Naive thymus-derived CD4-positive, alpha-beta T cell (primary cell): ENCODE measurements at regions of chr11 and their contacts with region 1.

Region 1: DNA sequence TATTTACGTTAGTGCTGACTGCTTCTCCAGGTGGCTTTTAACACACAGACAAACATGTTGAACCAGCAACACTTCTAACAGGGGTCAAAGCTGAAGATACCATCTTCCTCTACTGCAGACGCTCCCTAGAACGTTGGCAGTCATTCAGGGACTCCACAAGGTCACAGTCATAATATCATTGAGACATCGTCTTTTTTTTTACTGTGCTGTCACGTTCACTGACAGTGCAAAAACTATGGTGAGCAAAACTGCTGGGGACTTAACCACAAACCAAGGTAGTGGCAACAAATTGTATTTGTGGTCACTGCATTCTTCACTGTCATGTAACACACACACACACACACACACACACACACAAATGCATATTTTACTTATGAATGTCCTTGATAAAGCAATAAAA is 244.9 kb downstream of the CASP12 start:
- DNase-seq: no peak
- ATAC-seq: peak; percentile 76
- H3K4me3 ChIP-seq: no peak overlapping the region
- H3K4me3 Mint-ChIP-seq: no peak overlapping the region
- H3K27ac ChIP-seq: no peak overlapping the region
- H3K27ac Mint-ChIP-seq: no peak overlapping the region
- H3K4me1 ChIP-seq: peaks cover 0 to 10% of the 10 kb centered on the region in 2 donors
- H3K4me1 Mint-ChIP-seq: peaks cover 0 to 43% (median 9%) of the 10 kb centered on the region in 7 donors
- H3K27me3 ChIP-seq: no peaks in the 10 kb centered on the region
- H3K27me3 Mint-ChIP-seq: no peaks in the 10 kb centered on the region

Region 2: GRCh38 chr11:104728927-104729326 is 75.5 kb after region 1 on chr11:
- CTCF ChIA-PET with region 1: interaction called, 5 read pairs
- POLR2A ChIA-PET with region 1: no interaction called
- intact Hi-C with region 1: loop called in 1 of 2 experiments (anchors 5 kb)
- DNase-seq: no peak
- ATAC-seq: no peak
- H3K4me3 ChIP-seq: no peak overlapping the region
- H3K4me3 Mint-ChIP-seq: no peak overlapping the region
- H3K27ac ChIP-seq: no peak overlapping the region
- H3K27ac Mint-ChIP-seq: no peak overlapping the region
- H3K4me1 ChIP-seq: no peaks in the 10 kb centered on the region
- H3K4me1 Mint-ChIP-seq: peaks cover 0 to 20% (median 13%) of the 10 kb centered on the region in 7 donors
- H3K27me3 ChIP-seq: no peaks in the 10 kb centered on the region
- H3K27me3 Mint-ChIP-seq: no peaks in the 10 kb centered on the region